Calu3 (cell line): ENCODE measurements at regions of chr5 and their contacts with region 1.

Region 1: GRCh38 chr5:135887351-135887864 is 8.2 kb downstream of the IL9 start:
- DNase-seq: peak; percentile 88
- H3K4me3 Mint-ChIP-seq: no peak overlapping the region
- H3K27ac Mint-ChIP-seq: no peak overlapping the region
- H3K4me1 Mint-ChIP-seq: peaks cover 12% of the 10 kb centered on the region
- H3K27me3 Mint-ChIP-seq: peaks cover 38% of the 10 kb centered on the region
- CTCF ChIP-seq: peak; percentile 88

Region 2: GRCh38 chr5:135944967-135945560 is 57.7 kb after region 1 on chr5:
- CTCF ChIA-PET with region 1: no interaction called
- intact Hi-C with region 1: loop called (anchors 2 kb)
- DNase-seq: peak; percentile 66
- H3K4me3 Mint-ChIP-seq: no peak overlapping the region
- H3K27ac Mint-ChIP-seq: no peak overlapping the region
- H3K4me1 Mint-ChIP-seq: no peaks in the 10 kb centered on the region
- H3K27me3 Mint-ChIP-seq: no peaks in the 10 kb centered on the region
- CTCF ChIP-seq: peak; percentile 76

Region 3: GRCh38 chr5:135964670-135965320 is 77.4 kb after region 1 on chr5:
- CTCF ChIA-PET with region 1: no interaction called
- intact Hi-C with region 1: no loop called
- DNase-seq: no peak
- H3K4me3 Mint-ChIP-seq: no peak overlapping the region
- H3K27ac Mint-ChIP-seq: no peak overlapping the region
- H3K4me1 Mint-ChIP-seq: no peaks in the 10 kb centered on the region
- H3K27me3 Mint-ChIP-seq: no peaks in the 10 kb centered on the region
- CTCF ChIP-seq: no peak

Region 4: GRCh38 chr5:136080483-136081216 is 193.2 kb after region 1 on chr5:
- CTCF ChIA-PET with region 1: no interaction called
- intact Hi-C with region 1: loop called (anchors 1 kb)
- DNase-seq: peak; percentile 95
- H3K4me3 Mint-ChIP-seq: peak overlapping the region; percentile 71
- H3K27ac Mint-ChIP-seq: peak overlapping the region; percentile 99
- H3K4me1 Mint-ChIP-seq: no peaks in the 10 kb centered on the region
- H3K27me3 Mint-ChIP-seq: no peaks in the 10 kb centered on the region
- CTCF ChIP-seq: no peak

Region 5: GRCh38 chr5:136195971-136196820 is 308.8 kb after region 1 on chr5:
- CTCF ChIA-PET with region 1: no interaction called
- intact Hi-C with region 1: no loop called
- DNase-seq: no peak
- H3K4me3 Mint-ChIP-seq: no peak overlapping the region
- H3K27ac Mint-ChIP-seq: no peak overlapping the region
- H3K4me1 Mint-ChIP-seq: peaks cover 24% of the 10 kb centered on the region
- H3K27me3 Mint-ChIP-seq: peaks cover 38% of the 10 kb centered on the region
- CTCF ChIP-seq: no peak

Region 6: GRCh38 chr5:136212252-136212721 is 324.9 kb after region 1 on chr5:
- CTCF ChIA-PET with region 1: no interaction called
- intact Hi-C with region 1: loop called (anchors 1 kb)
- DNase-seq: peak; percentile 73
- H3K4me3 Mint-ChIP-seq: no peak overlapping the region
- H3K27ac Mint-ChIP-seq: no peak overlapping the region
- H3K4me1 Mint-ChIP-seq: no peaks in the 10 kb centered on the region
- H3K27me3 Mint-ChIP-seq: no peaks in the 10 kb centered on the region
- CTCF ChIP-seq: peak; percentile 96

Region 7: DNA sequence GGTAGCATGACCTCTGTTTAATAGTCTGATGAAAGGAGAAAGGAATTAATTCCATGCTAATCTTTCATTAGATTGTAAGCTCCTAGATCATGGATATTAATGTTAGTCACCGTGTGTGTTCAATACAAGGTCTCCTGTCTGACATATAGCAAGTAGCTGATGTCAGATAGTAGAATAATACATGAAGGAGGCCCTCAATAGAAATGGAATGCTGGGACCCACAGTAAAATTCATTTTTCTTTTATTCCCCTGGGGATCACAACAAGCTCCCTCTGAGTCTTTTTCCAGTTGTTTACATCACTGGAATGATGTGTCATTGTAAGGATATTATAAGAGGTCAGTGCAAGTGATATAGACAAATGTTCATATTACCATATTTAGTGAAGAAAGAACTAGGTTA is 718.2 kb after region 1 on chr5:
- CTCF ChIA-PET with region 1: no interaction called
- intact Hi-C with region 1: no loop called
- DNase-seq: no peak
- H3K4me3 Mint-ChIP-seq: no peak overlapping the region
- H3K27ac Mint-ChIP-seq: no peak overlapping the region
- H3K4me1 Mint-ChIP-seq: no peaks in the 10 kb centered on the region
- H3K27me3 Mint-ChIP-seq: no peaks in the 10 kb centered on the region
- CTCF ChIP-seq: no peak

Region 8: DNA sequence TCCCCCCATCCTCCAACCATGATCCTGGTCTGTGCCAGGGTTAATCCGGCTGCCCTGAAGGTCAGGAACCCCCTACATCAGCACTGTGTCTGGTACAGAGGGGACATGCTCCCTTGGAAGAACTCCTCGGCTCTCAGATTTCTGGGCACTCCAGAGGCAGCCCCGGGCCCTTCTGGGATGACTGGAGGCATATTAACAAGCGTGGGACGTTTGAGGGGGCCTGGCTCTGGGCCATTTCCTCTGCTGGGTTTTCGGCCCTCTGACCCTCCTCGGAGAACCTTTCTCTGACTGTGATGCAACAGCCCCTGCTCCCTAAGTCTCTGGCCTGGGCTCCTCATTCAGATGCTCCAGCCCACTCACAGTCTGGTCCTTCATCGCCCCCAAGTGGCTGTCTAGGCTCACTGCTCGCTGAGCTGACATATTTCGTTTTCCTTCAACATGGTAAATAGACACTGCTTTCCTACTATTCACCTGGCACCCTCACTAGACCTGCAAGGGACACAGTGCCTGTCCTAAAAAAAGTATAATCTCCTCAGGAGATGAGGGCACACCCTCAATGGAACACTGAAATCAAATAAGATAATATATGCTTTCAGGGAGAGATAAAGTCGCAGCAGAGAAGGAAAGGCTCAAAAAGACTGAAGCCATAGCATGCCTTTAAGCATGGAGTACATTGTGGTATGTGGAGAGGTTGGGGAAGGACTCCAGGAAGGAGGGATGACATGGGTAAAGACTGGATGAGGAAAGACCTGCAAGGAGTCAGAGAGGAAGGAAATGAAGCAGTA is 882.7 kb after region 1 on chr5:
- CTCF ChIA-PET with region 1: no interaction called
- intact Hi-C with region 1: loop called (anchors 5 kb)
- DNase-seq: peak; percentile 81
- H3K4me3 Mint-ChIP-seq: no peak overlapping the region
- H3K27ac Mint-ChIP-seq: no peak overlapping the region
- H3K4me1 Mint-ChIP-seq: peaks cover 7% of the 10 kb centered on the region
- H3K27me3 Mint-ChIP-seq: peaks cover 84% of the 10 kb centered on the region
- CTCF ChIP-seq: peak; percentile 73